Panc1 (cell line): ENCODE measurements at regions of chr5 and their contacts with region 1.

Region 1: DNA sequence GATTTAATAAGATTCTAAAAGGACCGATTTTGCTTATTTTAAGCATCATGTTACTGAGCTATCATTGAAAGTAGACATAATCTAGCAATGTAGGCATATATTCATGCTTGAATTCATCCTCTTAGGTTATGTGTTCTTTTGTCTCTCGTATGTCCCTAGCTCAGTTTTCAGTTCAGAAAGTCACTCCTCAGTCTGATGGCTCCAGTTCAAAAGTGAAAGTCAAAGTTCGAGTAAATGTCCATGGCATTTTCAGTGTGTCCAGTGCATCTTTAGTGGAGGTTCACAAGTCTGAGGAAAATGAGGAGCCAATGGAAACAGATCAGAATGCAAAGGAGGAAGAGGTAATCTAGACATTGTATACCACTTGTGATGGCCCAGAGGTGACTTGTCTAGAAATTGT is 39.2 kb downstream of the HSPA4 start:
- DNase-seq: no peak
- ATAC-seq: no peak
- H3K4me3 ChIP-seq: no peak overlapping the region
- H3K27ac ChIP-seq: no peak overlapping the region
- H3K4me1 ChIP-seq: no peaks in the 10 kb centered on the region
- H3K27me3 ChIP-seq: no peaks in the 10 kb centered on the region
- CTCF ChIP-seq: no peak

Region 2: GRCh38 chr5:133015466-133015865 is 75.6 kb before region 1 on chr5:
- CTCF ChIA-PET with region 1: no interaction called
- POLR2A ChIA-PET with region 1: interaction called, 15 read pairs
- in situ Hi-C with region 1: no loop called
- intact Hi-C with region 1: no loop called
- DNase-seq: no peak
- ATAC-seq: no peak
- H3K4me3 ChIP-seq: no peak overlapping the region
- H3K27ac ChIP-seq: no peak overlapping the region
- H3K4me1 ChIP-seq: no peaks in the 10 kb centered on the region
- H3K27me3 ChIP-seq: no peaks in the 10 kb centered on the region
- CTCF ChIP-seq: no peak